Right ventricle myocardium superior (tissue), 1 donor: ENCODE measurements at regions of chr4 and their contacts with region 1.

Region 1: GRCh38 chr4:10237131-10237530 is 120.5 kb upstream of the WDR1 start:
- DNase-seq: no peak
- ATAC-seq: no peak

Region 2: GRCh38 chr4:10204401-10205058 is 32.6 kb before region 1 on chr4:
- intact Hi-C with region 1: loop called (anchors 1 kb)
- DNase-seq: peak; percentile 50
- ATAC-seq: peak; percentile 57

Region 3: GRCh38 chr4:10582059-10582686 is 345.0 kb after region 1 on chr4:
- intact Hi-C with region 1: no loop called
- DNase-seq: no peak
- ATAC-seq: peak; percentile 77

Region 4: DNA sequence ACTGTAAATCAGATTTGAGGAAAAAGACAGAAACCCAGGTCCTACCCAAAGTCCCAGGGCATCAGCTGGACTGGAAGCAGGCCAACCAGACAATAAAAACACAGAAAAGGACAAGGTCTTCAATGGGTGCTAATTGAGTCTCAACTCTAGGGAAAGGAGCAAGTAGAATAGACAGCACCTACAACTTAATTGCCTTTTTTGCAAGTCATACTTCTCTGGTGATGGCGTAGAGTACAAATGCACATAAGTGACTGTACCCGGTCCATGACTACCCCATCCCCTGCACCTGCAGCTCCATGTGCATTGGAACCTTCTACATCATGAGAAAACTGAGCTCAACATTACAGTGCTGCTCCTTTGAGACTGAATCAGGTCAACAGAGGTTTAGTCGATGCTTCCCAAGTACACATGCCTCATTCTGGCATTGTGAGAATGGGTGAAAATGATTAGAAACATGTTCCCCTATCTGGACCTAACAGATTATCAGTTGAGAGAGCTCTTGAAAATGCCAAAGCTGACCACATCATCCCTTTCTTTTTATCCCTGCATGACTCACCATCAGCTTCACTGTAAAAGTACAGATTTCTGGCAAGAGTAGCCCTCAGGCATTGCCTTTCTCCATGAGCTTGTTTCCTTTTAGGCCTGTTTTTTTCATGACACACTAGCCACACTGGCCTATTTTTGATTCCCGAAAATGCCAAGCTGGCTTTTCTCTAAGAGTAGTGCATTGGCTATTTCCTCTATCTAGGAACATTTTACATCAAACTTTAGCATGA is 893.3 kb after region 1 on chr4:
- intact Hi-C with region 1: no loop called
- DNase-seq: no peak
- ATAC-seq: peak; percentile 49